Activated B cell treated with CpG ODN at 0.5 μM for 24 hours (primary cell): ENCODE measurements at regions of chr20 and their contacts with region 1.

Region 1: DNA sequence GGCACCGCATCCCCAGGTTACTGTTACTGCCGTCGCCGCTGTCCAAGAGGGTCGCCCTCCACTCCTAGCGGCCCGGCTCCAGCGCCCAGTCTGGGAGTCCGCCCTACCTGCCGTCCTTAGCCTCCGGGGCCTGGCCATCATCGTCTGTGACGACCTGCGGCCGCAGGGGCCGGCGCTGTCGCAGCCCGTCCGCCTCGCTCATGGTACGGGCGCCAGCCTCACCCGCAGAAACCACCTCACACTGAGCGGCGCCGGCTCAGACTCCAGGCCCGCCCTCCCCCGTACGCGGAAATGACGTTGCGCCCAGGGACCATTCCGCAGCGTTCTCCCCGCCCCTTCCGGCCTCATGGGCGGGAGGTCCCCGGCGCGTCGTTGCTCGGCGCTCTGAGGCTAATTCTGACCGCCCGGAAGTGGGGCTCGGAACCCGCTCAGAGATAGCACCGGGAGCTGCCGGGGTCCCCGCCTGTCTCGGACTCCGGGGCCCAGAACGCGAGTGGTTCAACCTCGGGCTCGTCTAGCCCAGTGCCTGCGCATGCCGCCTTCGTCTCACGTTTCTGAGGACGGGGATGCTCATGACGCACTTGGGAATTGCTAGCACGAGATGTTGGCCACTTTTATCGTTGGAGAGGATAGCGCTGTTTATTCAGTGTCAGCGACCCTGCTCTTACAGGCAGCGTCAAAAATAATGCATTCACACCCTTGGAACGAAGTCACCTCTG is at the start of gene APMAP:
- DNase-seq: peak; percentile 97
- ATAC-seq: peak; percentile 90
- H3K4me3 Mint-ChIP-seq: peak within 1 kb of the TSS; percentile 92
- H3K27ac Mint-ChIP-seq: peak within 1 kb of the TSS; percentile 95
- H3K4me1 Mint-ChIP-seq: peaks cover 48% of the 10 kb centered on the region
- H3K27me3 Mint-ChIP-seq: no peaks in the 10 kb centered on the region
- CTCF ChIP-seq: no peak
- total RNA-seq, gene APMAP: 22.3 and 24.9 TPM in 2 replicates

Region 2: DNA sequence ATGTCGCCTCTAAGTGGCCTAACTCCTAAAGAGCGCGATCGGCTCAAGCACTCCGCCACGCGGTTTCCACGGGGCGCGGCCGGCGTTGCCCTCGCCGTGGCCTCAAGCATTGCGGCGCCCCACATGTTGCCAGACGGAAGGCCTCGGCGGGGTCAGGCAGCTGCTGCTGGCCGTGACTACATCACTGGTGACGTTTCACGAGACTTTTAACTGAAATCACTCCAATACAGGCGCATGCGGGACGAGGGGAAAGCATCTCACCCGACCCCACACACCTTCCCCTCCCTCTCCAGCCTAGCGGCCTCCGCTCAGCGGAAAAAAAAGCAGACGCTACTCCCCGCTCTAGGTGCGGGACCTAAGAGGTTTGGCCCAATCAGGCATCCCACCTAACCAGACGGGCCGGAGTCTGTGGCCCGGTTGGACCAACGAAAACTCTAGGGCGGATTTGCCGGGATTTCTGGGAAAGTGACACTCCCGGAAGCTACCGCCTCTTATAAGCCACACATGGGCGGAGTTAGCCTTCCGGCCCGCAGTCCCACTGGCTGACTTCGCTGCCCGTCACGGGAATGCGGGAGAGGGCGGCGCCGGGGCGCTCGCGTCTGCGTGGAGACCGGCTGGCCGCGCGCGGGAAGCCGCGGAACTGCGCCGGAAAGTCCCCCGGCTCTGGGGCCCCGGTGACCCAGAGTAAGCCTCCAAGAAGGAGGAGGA is 1642.3 kb before region 1 on chr20 and contains the start of gene NXT1:
- CTCF ChIA-PET with region 1: no interaction called
- POLR2A ChIA-PET with region 1: interaction called, 3 read pairs
- intact Hi-C with region 1: loop called (anchors 2 kb)
- DNase-seq: peak; percentile 94
- ATAC-seq: peak; percentile 80
- H3K4me3 Mint-ChIP-seq: peak within 1 kb of the TSS; percentile 99
- H3K27ac Mint-ChIP-seq: peak within 1 kb of the TSS; percentile 100
- H3K4me1 Mint-ChIP-seq: peaks cover 32% of the 10 kb centered on the region
- H3K27me3 Mint-ChIP-seq: no peaks in the 10 kb centered on the region
- CTCF ChIP-seq: no peak
- total RNA-seq, gene NXT1: 28.8 and 30.2 TPM in 2 replicates

Region 3: DNA sequence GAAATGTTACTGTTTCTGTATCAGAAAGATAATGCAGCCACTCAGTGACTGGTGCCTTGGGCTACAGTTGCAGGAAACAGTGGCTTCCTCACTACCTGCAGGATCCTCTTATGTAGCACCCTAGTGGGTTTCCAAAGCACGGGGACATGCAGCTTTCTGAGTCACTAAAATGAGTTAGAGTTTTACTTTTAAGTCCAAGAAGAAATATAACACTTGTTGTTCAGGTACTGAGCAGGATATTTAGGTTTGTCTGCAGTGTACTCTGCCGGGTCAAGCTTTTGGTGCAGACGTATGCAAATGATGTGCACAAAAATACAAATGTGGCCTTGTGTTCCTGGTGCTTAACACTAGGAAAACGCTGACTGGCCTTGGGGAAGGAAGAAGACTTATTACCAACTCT is 43.3 kb after region 1 on chr20:
- CTCF ChIA-PET with region 1: interaction called, 10 read pairs
- POLR2A ChIA-PET with region 1: interaction called, 7 read pairs
- intact Hi-C with region 1: no loop called
- DNase-seq: no peak
- ATAC-seq: no peak
- H3K4me3 Mint-ChIP-seq: peak overlapping the region; percentile 61
- H3K27ac Mint-ChIP-seq: peak overlapping the region; percentile 84
- H3K4me1 Mint-ChIP-seq: peaks cover 62% of the 10 kb centered on the region
- H3K27me3 Mint-ChIP-seq: no peaks in the 10 kb centered on the region
- CTCF ChIP-seq: no peak

Region 4: GRCh38 chr20:25065625-25066338 is 73.1 kb after region 1 on chr20:
- CTCF ChIA-PET with region 1: interaction called, 113 read pairs
- POLR2A ChIA-PET with region 1: interaction called, 13 read pairs
- intact Hi-C with region 1: loop called (anchors 1 kb)
- DNase-seq: peak; percentile 48
- ATAC-seq: peak; percentile 86
- H3K4me3 Mint-ChIP-seq: no peak overlapping the region
- H3K27ac Mint-ChIP-seq: no peak overlapping the region
- H3K4me1 Mint-ChIP-seq: peaks cover 21% of the 10 kb centered on the region
- H3K27me3 Mint-ChIP-seq: peaks cover under 1% of the 10 kb centered on the region
- CTCF ChIP-seq: peak; percentile 36

Region 5: DNA sequence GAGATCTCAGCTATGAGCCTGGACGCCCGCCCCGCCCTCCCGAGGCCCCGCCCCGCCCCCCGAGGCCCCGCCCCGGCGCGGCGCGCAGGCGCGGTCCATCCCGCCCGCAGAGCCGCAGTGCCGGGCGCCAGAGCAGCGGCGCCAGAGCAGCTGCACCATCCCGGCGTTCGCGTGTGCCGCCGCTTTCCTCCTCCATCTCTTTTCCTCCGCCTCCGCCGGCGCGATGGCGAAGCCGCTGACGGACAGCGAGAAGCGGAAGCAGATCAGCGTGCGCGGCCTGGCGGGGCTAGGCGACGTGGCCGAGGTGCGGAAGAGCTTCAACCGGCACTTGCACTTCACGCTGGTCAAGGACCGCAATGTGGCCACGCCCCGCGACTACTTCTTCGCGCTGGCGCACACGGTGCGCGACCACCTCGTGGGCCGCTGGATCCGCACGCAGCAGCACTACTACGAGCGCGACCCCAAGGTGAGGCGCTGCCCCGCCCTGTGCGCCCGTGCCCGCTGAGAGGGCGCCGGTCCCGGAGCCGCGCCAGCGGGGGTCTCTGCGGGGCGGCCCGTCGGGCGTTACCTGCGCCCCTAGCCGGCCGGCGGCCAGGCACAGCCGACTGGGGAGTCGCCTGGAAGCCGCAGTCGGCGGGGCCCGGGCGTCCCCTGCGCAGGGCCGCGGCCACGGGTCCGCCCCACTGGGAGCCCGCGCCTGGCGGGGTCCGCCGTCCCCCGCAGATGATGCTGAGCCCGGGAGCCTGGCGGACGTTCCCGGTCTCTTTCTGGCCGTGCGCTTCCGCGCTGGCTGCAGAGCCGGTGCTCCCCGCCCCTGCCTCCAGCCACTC is 255.5 kb after region 1 on chr20 and contains the start of gene PYGB:
- CTCF ChIA-PET with region 1: no interaction called
- POLR2A ChIA-PET with region 1: no interaction called
- intact Hi-C with region 1: loop called (anchors 2 kb)
- DNase-seq: peak; percentile 77
- ATAC-seq: peak; percentile 87
- H3K4me3 Mint-ChIP-seq: peak within 1 kb of the TSS; percentile 94
- H3K27ac Mint-ChIP-seq: peak within 1 kb of the TSS; percentile 86
- H3K4me1 Mint-ChIP-seq: peaks cover 25% of the 10 kb centered on the region
- H3K27me3 Mint-ChIP-seq: peaks cover 10% of the 10 kb centered on the region
- CTCF ChIP-seq: no peak
- total RNA-seq, gene PYGB: 21.5 and 23.5 TPM in 2 replicates

Region 6: DNA sequence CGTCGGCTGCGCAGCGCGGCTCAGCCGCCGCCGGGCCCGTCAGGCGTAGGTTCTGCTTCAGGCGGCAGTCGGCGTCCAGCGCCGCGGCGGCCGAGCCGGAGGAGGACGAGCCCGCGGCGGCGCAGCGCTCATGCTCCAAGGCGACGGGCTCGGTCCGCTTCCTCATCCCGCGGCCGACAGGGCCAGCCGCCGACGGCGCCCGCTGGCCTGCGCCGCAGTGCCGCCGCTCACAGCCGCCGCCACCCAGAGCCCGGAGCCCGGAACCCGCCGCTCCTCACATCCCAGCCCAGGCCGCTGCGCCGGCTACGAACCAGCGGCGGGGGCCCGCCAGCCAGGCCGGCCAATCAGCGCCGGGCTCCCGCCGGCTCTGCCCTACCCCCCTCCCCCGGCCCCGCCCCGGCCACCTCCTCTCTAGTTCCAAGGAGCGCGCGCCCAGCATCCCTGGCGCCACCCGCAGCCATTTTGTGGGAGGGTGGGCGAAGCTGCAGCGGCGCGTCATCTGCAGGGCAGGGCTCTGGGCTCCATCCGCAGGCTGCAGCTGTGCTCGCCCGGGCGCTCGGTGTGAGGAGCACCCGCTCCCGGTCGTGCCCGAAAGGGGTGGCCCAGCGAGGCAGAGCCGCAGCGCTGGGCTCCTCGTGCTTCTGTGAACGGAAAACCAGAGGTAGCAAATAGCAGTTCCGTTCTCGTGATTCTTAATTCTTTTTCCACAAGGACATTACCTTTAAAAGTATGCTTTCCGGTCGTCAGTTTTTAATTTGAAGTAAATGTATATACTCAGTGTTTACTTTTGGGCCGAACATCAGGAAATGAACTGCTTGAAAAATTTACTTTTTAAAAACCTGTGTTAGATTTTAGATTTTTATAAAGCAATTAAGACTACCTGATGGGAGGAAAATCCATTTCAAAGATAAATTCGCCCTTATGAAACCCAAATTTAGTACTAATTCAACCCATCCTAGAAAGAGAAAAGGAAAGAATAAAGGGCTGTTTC is 398.2 kb after region 1 on chr20 and contains the start of gene ABHD12:
- CTCF ChIA-PET with region 1: no interaction called
- POLR2A ChIA-PET with region 1: no interaction called
- intact Hi-C with region 1: loop called (anchors 1 kb)
- DNase-seq: peak; percentile 85
- ATAC-seq: peak; percentile 93
- H3K4me3 Mint-ChIP-seq: peak within 1 kb of the TSS; percentile 85
- H3K27ac Mint-ChIP-seq: peak within 1 kb of the TSS; percentile 76
- H3K4me1 Mint-ChIP-seq: peaks cover 17% of the 10 kb centered on the region
- H3K27me3 Mint-ChIP-seq: no peaks in the 10 kb centered on the region
- CTCF ChIP-seq: no peak
- total RNA-seq, gene ABHD12: 16.1 and 16.3 TPM in 2 replicates

Region 7: DNA sequence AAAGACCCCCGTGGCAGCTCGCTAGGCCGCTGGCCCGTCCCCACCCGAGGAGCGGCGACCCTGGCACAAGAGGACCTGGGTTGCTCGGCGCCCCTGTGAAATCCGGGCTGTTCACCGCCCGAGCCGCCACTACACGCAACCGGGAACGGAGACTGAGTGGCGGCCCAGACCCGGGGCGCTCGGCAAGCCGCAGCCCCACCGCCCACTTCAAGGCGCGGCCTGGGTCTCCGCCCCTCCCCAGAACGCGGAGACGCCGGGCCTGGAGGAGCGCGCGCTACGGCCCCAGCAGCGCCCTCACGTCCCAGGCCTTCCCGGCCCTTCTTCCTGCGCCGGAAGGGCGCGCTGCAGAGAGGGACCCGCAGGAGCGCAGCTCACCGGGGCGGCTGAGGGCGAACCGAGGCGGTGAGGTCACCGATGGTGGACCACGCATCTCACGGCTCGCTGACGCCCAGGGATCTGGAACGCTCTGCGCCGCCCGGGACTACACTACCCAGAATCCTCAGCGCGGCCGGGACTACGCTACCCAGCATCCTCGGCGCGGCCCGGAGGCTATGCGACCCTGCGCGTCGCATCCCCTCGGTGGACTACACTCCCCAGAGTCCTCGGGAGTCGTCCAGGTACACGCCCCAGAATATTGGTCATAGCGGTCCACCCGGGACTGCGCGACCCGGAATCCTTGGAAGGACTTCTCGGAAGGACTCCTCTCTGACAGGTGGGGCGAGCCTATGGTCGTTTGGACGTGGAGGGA is 703.9 kb after region 1 on chr20 and contains the start of gene ZNF337:
- CTCF ChIA-PET with region 1: no interaction called
- POLR2A ChIA-PET with region 1: no interaction called
- intact Hi-C with region 1: loop called (anchors 1 kb)
- DNase-seq: peak; percentile 93
- ATAC-seq: peak; percentile 97
- H3K4me3 Mint-ChIP-seq: peak within 1 kb of the TSS; percentile 94
- H3K27ac Mint-ChIP-seq: peak within 1 kb of the TSS; percentile 85
- H3K4me1 Mint-ChIP-seq: peaks cover 30% of the 10 kb centered on the region
- H3K27me3 Mint-ChIP-seq: no peaks in the 10 kb centered on the region
- CTCF ChIP-seq: no peak
- total RNA-seq, gene ZNF337: 13.5 and 15.5 TPM in 2 replicates